ENCODE measurements at regions of chr4 and their contacts with region 1.

Region 1: DNA sequence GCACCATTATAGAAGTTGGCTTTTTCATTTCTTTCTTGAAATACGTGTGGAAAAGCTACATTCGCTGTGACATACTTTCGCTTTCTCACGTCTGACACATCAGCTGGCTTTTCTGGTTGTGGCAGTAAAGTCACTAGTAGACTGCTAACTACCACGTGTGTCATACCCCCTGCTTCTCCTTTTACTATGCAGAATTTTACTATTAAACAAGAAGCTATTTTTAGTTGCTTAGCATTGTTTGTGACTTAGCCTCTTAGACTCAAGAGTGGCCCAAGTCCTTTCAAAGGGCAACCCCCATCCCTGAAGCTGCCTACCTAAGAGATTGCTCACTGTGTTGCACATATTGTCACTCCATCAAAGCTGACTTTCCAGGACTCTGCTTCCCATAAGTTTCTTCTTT is 2.1 kb upstream of the IL2 start:
- DNase-seq: peak; percentile 83
- H3K4me3 Mint-ChIP-seq: peak overlapping the region; percentile 81
- H3K27ac Mint-ChIP-seq: peak overlapping the region; percentile 88
- H3K4me1 Mint-ChIP-seq: peaks cover 35% of the 10 kb centered on the region
- H3K27me3 Mint-ChIP-seq: no peaks in the 10 kb centered on the region

Region 2: DNA sequence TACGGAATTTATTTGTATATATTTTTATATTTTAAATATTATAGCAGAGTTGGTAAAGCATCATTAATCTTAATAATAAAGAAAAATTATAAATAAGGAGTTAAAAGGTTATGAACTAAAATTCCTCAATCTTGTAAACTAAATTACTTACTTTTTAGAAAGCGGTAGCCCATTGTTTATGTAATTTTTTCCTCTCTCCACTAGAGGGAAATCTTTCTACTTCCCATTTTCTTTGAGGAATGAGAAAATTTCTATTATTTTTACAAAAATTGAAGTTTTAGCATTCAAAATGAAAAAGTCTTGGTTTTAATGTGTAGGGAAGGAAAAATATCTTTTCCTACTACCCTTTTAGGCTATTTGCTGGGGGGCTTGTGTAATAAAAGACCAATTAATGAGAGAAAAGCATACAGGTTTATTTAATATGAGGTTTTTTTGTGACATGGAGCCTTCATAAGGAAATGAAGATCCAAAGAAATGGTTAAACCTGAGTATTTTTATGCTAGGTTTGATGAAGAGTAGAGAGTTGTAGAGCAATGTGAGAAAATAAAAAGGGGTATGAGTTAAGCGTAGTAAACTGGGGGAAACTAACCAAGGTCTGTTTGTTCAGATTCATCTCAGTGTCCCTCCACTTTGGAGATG is 148.5 kb before region 1 on chr4:
- intact Hi-C with region 1: loop called (anchors 5 kb)
- DNase-seq: no peak
- H3K4me3 Mint-ChIP-seq: no peak overlapping the region
- H3K27ac Mint-ChIP-seq: no peak overlapping the region
- H3K4me1 Mint-ChIP-seq: peaks cover 8% of the 10 kb centered on the region
- H3K27me3 Mint-ChIP-seq: no peaks in the 10 kb centered on the region

Region 3: DNA sequence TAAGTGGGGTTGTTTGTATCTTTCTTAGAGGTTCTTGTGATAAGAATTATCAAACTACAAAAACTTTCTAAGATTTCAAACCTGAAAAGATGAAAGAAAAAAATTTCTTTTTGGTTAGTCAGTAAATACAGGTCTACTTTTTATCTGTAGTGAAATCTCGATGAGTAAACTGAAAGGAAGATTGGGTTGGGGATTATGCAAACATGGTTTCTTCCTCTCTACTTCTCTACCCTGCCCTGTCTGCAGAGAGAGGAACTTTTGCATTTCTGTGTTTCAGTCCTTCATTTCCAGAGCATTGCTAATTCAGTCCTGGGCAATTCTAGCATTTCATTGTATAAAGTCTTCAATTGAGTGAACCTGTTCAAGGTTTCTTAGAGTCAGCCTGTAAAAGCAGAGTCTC is 49.5 kb after region 1 on chr4:
- intact Hi-C with region 1: loop called (anchors 1 kb)
- DNase-seq: peak; percentile 70
- H3K4me3 Mint-ChIP-seq: peak overlapping the region; percentile 65
- H3K27ac Mint-ChIP-seq: peak overlapping the region; percentile 82
- H3K4me1 Mint-ChIP-seq: peaks cover 55% of the 10 kb centered on the region
- H3K27me3 Mint-ChIP-seq: no peaks in the 10 kb centered on the region

Region 4: GRCh38 chr4:122552898-122553297 is 94.3 kb after region 1 on chr4:
- intact Hi-C with region 1: loop called (anchors 1 kb)
- DNase-seq: no peak
- H3K4me3 Mint-ChIP-seq: peak overlapping the region; percentile 14
- H3K27ac Mint-ChIP-seq: peak overlapping the region; percentile 78
- H3K4me1 Mint-ChIP-seq: peaks cover 59% of the 10 kb centered on the region
- H3K27me3 Mint-ChIP-seq: no peaks in the 10 kb centered on the region

Region 5: DNA sequence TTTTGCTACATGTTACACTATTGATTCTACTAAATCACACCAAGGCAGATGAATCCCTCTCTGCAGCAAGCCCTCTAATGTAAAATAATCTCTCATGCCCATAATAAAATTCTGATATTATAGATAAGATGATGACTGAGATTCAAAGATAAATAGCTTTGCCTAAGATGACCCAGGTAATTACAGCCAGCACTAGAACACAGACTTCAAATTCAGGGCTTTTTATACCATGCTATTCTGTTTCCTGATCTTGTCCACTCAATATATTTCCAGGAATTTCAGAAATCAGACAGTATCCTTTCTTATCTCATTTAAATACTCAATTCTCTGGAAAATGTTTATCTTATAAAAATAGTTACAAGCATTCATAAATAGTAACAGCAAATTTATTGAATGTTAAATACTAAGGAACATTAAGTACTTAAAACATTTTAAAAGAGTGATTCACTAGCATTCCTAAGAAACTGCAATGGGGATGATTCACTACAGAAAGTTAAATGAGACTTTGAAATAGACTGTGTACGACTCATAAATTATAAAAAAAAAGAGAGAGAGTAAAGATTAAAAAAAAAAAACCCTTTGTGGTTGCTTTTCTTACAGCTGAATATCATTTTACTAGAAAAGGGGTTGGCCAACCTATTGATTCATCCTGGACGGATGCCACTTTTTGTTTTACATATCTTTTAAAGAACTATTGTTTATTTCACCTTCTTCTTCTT is 208.1 kb after region 1 on chr4:
- intact Hi-C with region 1: loop called (anchors 2 kb)
- DNase-seq: no peak
- H3K4me3 Mint-ChIP-seq: peak overlapping the region; percentile 59
- H3K27ac Mint-ChIP-seq: peak overlapping the region; percentile 94
- H3K4me1 Mint-ChIP-seq: peaks cover 69% of the 10 kb centered on the region
- H3K27me3 Mint-ChIP-seq: no peaks in the 10 kb centered on the region

Region 6: DNA sequence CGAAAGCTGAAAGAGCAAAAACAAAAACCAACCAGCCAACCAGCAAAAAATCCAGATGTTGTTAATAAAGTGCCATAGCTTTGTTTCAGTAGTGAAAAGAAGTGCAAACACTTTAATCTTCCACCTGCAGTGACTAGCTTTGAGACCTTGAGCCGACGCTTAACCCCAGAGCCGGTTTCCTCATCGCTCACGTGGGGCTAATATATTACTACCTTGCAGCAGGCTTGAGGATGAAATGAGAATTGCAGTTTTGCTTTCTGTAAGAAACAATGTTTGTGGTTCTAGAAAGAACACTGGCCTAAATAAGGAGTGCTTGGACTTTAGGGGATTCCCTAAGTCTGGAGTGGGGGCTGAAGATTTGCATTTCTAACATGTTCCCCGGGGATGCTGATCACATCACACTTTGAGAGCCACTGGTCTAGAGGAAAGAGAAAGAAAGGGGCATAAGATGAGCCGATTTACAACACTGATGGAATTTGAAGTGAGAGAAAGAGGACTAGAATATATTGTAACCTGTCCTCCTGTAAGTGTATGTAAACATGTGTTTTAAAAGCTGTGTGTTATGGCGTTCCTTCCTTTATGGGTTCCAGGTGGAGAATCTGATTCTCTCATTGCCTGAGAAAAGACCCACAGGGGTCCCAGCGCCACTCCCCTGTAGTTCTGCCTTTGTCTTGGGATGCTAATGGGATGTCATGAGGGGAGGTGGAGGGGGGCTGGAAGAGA is 369.4 kb after region 1 on chr4:
- intact Hi-C with region 1: loop called (anchors 5 kb)
- DNase-seq: peak; percentile 79
- H3K4me3 Mint-ChIP-seq: peak overlapping the region; percentile 83
- H3K27ac Mint-ChIP-seq: peak overlapping the region; percentile 94
- H3K4me1 Mint-ChIP-seq: peaks cover 24% of the 10 kb centered on the region
- H3K27me3 Mint-ChIP-seq: peaks cover 64% of the 10 kb centered on the region

Measured in activated CD4-positive, alpha-beta T cell treated with anti-CD3 and anti-CD28 coated beads, Interleukin-2, amount 10 ng/mL, durations not matched to agents 24 days and 14 days (primary cell).